Mammary epithelial cell (primary cell): ENCODE measurements at regions of chr1 and their contacts with region 1.

Region 1: DNA sequence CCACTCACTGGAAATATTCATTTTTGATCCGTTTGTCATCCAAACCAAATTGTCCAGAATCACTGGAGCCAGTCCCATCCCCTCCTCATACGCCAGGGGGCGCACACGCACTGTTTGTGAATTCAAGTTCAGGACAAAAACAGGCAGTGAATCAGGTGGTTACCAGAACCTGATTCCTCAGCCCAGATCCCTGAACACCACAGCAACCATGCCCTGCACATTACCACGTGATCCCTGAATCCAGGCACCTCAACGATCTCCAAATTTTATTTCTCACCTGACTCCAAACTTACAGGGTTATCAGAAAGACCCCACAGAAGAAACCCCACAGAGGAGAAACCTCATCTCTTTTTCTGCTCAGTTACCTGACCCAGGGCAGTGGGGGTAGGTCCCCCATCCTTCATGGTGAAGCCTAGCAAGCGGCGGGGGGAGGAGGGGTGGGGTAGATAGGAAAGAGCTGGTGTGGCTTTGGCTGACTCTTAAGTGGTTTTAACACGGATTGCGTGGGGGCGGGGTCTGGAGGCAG is 1.4 kb upstream of the PTPRF start:
- DNase-seq: peak; percentile 75
- H3K4me3 ChIP-seq: no peak overlapping the region
- H3K27ac ChIP-seq: no peak overlapping the region
- H3K4me1 ChIP-seq: peaks cover 24% of the 10 kb centered on the region
- H3K27me3 ChIP-seq: no peaks in the 10 kb centered on the region
- CTCF ChIP-seq: peak; percentile 93 to 98

Region 2: DNA sequence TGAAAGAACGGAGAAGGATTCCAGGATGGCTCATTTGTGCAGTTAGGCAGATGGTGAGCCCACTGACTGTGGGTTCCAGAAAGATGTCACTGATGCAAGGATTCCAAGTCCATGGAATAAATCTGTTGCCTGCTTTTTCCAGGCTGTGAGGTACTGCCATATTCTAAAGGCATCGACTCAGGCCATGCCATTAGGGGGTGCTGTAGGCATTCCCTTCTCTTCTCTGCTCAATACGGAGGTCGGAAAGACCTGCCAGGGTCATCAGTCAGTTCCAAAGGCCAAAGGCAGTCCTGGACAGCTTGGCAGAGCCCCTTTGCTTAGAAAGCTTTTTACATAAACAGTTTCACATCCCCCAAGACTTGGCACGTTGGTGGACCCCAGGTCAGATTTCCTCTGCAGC is 291.2 kb before region 1 on chr1:
- CTCF ChIA-PET with region 1: no interaction called
- dilution Hi-C with region 1: no loop called
- in situ Hi-C with region 1: no loop called
- intact Hi-C with region 1: loop called (anchors 2 kb)
- DNase-seq: peak; percentile 28
- H3K4me3 ChIP-seq: no peak overlapping the region
- H3K27ac ChIP-seq: no peak overlapping the region
- H3K4me1 ChIP-seq: peaks cover 7% of the 10 kb centered on the region
- H3K27me3 ChIP-seq: no peaks in the 10 kb centered on the region
- CTCF ChIP-seq: peak; percentile 85 to 93

Region 3: GRCh38 chr1:43473463-43473862 is 55.8 kb before region 1 on chr1:
- CTCF ChIA-PET with region 1: no interaction called
- dilution Hi-C with region 1: no loop called
- in situ Hi-C with region 1: no loop called
- intact Hi-C with region 1: loop called (anchors 5 kb)
- DNase-seq: no peak
- H3K4me3 ChIP-seq: no peak overlapping the region
- H3K27ac ChIP-seq: peak overlapping the region; percentile 89
- H3K4me1 ChIP-seq: peaks cover 51% of the 10 kb centered on the region
- H3K27me3 ChIP-seq: no peaks in the 10 kb centered on the region
- CTCF ChIP-seq: no peak

Region 4: DNA sequence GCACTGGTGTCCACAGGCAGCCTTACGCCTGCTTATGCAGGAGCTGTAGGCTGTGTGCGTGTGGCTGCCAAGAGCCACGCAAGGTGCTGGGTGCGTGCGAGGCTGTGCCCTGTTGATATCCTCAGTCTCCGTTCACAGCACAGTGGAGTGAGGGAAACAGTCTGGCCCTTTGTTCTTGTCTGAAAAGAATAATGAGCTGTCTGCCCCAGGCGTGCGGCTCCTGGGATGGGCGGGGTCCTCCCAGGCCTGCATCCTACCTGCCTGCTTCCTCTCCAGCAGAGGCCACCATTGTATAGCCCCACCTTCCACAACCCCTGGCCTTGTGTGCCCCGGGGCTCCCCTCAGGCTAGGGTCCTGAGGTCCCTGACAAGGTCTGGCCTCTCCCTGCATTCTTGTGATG is 73.7 kb after region 1 on chr1:
- CTCF ChIA-PET with region 1: no interaction called
- dilution Hi-C with region 1: no loop called
- in situ Hi-C with region 1: no loop called
- intact Hi-C with region 1: loop called (anchors 5 kb)
- DNase-seq: peak; percentile 81
- H3K4me3 ChIP-seq: no peak overlapping the region
- H3K27ac ChIP-seq: no peak overlapping the region
- H3K4me1 ChIP-seq: peaks cover 7% of the 10 kb centered on the region
- H3K27me3 ChIP-seq: no peaks in the 10 kb centered on the region
- CTCF ChIP-seq: no peak

Region 5: DNA sequence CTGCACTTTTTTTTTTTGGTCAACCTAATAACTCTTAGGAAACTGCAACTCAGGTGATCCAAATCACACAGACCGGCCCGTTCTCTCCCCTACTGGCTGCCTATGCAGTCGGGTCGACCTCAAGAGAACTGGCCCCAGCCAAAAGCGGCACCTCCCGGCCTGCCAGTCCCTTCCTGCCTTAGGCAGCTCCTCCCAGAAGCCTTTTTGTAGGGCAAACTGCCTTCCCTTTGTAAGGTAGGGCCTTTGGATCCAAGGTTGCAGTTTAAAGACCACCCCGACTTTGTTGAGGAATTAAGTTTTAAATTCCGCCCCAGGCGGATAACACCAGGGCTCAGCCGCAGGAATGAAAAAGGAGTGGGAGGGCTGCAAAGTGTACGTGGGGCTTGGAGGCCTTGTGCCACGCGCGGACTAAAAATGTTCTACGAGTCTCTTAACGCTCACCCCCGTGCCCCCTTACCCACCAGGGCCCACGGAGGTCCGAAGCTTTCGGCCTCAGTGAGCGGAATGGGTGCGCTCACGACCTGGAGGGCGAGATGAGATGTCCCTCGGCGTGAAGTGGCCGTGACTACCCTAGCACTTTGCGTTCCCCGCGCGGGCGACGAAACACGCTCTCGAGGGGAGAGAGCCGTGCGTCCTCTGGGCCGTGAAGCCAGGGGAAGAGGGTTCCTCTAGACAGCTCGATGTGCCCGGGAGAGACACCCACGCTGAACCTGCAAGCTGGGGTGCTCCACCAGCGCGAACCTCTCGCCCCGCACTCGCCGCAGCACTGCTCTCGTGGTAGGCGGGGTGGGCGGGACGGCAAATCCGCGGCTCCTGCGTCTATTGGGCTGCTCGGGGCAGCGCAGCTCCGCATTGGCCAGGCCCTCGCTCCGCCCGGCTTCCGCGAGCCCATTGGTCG is 177.6 kb after region 1 on chr1:
- CTCF ChIA-PET with region 1: no interaction called
- dilution Hi-C with region 1: no loop called
- in situ Hi-C with region 1: no loop called
- intact Hi-C with region 1: loop called (anchors 2 kb)
- DNase-seq: peak; percentile 89
- H3K4me3 ChIP-seq: peak overlapping the region; percentile 65 to 89 (median 67)
- H3K27ac ChIP-seq: peak overlapping the region; percentile 8
- H3K4me1 ChIP-seq: peaks cover 33% of the 10 kb centered on the region
- H3K27me3 ChIP-seq: no peaks in the 10 kb centered on the region
- CTCF ChIP-seq: no peak

Region 6: DNA sequence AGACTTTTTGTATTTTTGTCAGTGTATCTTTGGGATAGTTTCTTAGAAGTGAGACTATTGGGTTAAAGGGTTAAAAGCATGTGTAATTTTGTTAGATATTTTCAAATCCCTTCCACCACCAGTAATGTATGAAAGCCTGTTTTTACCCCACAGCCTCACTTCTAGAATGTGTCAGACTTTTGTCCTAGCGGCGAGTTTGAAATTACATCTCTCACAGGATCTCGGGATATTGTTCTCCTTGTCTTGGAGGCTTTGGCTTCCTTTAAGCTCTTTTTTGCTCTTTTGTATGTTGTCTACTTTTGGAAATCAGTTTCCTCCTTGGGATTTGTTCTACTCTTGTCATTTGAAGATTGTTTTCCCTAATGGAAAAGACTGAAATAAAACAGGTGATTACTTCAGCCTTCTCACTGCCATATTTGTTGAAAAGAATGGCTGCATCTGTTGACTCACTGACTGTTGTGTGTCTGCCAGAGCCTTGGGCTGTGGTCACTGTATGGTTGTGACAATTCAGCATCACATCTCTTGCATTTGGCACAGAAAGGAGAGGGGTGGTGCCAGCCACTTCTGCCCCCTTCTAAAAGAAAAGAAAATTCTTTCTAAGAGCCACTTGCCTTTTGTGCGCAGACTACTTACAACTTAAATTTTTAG is 200.7 kb after region 1 on chr1:
- CTCF ChIA-PET with region 1: no interaction called
- dilution Hi-C with region 1: no loop called
- in situ Hi-C with region 1: no loop called
- intact Hi-C with region 1: no loop called
- DNase-seq: no peak
- H3K4me3 ChIP-seq: no peak overlapping the region
- H3K27ac ChIP-seq: no peak overlapping the region
- H3K4me1 ChIP-seq: no peaks in the 10 kb centered on the region
- H3K27me3 ChIP-seq: no peaks in the 10 kb centered on the region
- CTCF ChIP-seq: no peak

Region 7: GRCh38 chr1:44036409-44037139 is 507.3 kb after region 1 on chr1:
- CTCF ChIA-PET with region 1: no interaction called
- dilution Hi-C with region 1: loop called (anchors 10 kb)
- in situ Hi-C with region 1: no loop called
- intact Hi-C with region 1: loop called (anchors 1 kb)
- DNase-seq: peak; percentile 62
- H3K4me3 ChIP-seq: no peak overlapping the region
- H3K27ac ChIP-seq: no peak overlapping the region
- H3K4me1 ChIP-seq: peaks cover 26% of the 10 kb centered on the region
- H3K27me3 ChIP-seq: no peaks in the 10 kb centered on the region
- CTCF ChIP-seq: peak; percentile 88 to 95